Naive thymus-derived CD4-positive, alpha-beta T cell (primary cell): ENCODE measurements at regions of chr17 and their contacts with region 1.

Region 1: GRCh38 chr17:33520426-33521330 is 227.6 kb upstream of the ASIC2 start:
- DNase-seq: peak in 4 of 9 donors; percentile 14 to 38 (median 20)
- ATAC-seq: peak; percentile 22
- H3K4me3 ChIP-seq: no peak overlapping the region
- H3K4me3 Mint-ChIP-seq: no peak overlapping the region
- H3K27ac ChIP-seq: no peak overlapping the region
- H3K27ac Mint-ChIP-seq: no peak overlapping the region
- H3K4me1 ChIP-seq: no peaks in the 10 kb centered on the region
- H3K4me1 Mint-ChIP-seq: peaks cover 0 to 2% (median 0%) of the 10 kb centered on the region in 7 donors
- H3K27me3 ChIP-seq: no peaks in the 10 kb centered on the region
- H3K27me3 Mint-ChIP-seq: peaks cover 0 to 12% (median 4%) of the 10 kb centered on the region in 5 donors

Region 2: DNA sequence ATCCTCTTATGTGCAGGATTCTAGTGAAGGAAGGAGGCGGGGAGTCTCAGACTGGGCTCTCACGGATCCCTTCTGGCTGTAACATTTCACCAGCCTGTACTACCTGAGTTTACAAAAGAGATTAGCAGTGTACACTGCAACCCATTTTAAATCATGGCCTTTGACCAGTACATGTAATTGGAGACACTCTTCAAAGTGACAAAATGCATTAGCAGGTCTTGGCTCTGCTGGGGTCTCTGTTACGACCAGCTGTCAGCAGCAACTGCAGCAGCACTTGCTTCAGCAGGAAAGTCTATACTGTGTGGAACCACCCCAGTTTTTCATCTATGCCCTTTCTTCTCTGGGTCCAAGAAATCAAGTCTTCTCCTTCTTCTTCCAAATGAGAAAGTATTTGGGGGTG is 95.2 kb after region 1 on chr17:
- CTCF ChIA-PET with region 1: no interaction called
- POLR2A ChIA-PET with region 1: no interaction called
- intact Hi-C with region 1: no loop called
- DNase-seq: no peak
- ATAC-seq: no peak
- H3K4me3 ChIP-seq: no peak overlapping the region
- H3K4me3 Mint-ChIP-seq: no peak overlapping the region
- H3K27ac ChIP-seq: no peak overlapping the region
- H3K27ac Mint-ChIP-seq: no peak overlapping the region
- H3K4me1 ChIP-seq: no peaks in the 10 kb centered on the region
- H3K4me1 Mint-ChIP-seq: no peaks in the 10 kb centered on the region
- H3K27me3 ChIP-seq: no peaks in the 10 kb centered on the region
- H3K27me3 Mint-ChIP-seq: peaks cover 7 to 22% (median 13%) of the 10 kb centered on the region in 5 donors

Region 3: GRCh38 chr17:33674685-33675084 is 154.0 kb after region 1 on chr17:
- CTCF ChIA-PET with region 1: no interaction called
- POLR2A ChIA-PET with region 1: no interaction called
- intact Hi-C with region 1: loop called in 1 of 2 experiments (anchors 1 kb)
- DNase-seq: peak in 6 of 9 donors; percentile 6 to 44 (median 16)
- ATAC-seq: peak; percentile 74
- H3K4me3 ChIP-seq: no peak overlapping the region
- H3K4me3 Mint-ChIP-seq: no peak overlapping the region
- H3K27ac ChIP-seq: no peak overlapping the region
- H3K27ac Mint-ChIP-seq: no peak overlapping the region
- H3K4me1 ChIP-seq: no peaks in the 10 kb centered on the region
- H3K4me1 Mint-ChIP-seq: peaks cover 0 to 28% (median 0%) of the 10 kb centered on the region in 7 donors
- H3K27me3 ChIP-seq: no peaks in the 10 kb centered on the region
- H3K27me3 Mint-ChIP-seq: peaks cover 6 to 35% (median 8%) of the 10 kb centered on the region in 5 donors

Region 4: DNA sequence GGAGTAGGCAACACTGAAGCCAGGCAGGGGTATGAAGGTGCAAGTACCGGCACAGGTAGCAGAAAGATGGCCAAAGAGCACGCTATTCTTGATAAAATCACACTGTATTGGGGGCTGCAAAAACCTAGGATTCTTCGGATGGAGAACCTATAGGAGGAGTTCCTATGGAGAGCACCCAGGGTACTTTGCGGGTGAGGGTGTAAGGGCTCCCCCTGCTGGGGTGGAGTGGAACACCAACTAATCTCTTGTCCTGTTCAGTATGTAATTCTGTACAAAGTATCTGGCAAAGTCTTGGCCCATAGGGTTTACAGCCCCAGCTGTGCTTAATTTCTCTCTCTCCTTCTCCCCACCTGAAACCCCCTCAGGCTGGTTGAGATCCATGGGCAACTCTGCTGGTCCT is 165.5 kb after region 1 on chr17:
- CTCF ChIA-PET with region 1: no interaction called
- POLR2A ChIA-PET with region 1: no interaction called
- intact Hi-C with region 1: no loop called
- DNase-seq: peak in 1 of 9 donors; percentile 25
- ATAC-seq: peak; percentile 26
- H3K4me3 ChIP-seq: no peak overlapping the region
- H3K4me3 Mint-ChIP-seq: no peak overlapping the region
- H3K27ac ChIP-seq: no peak overlapping the region
- H3K27ac Mint-ChIP-seq: no peak overlapping the region
- H3K4me1 ChIP-seq: no peaks in the 10 kb centered on the region
- H3K4me1 Mint-ChIP-seq: no peaks in the 10 kb centered on the region
- H3K27me3 ChIP-seq: no peaks in the 10 kb centered on the region
- H3K27me3 Mint-ChIP-seq: peaks cover 0 to 4% (median 0%) of the 10 kb centered on the region in 5 donors